ENCODE measurements at regions of chrX and their contacts with region 1.

Region 1: GRCh38 chrX:72258174-72258573 is 18.9 kb downstream of the RPS4X start:
- DNase-seq: peak; percentile 64
- ATAC-seq: peak; percentile 83
- H3K4me3 ChIP-seq: peak overlapping the region; percentile 16 to 61 (median 32); a peak in 4 of 6 replicates
- H3K27ac ChIP-seq: peak overlapping the region; percentile 49
- H3K4me1 ChIP-seq: peaks cover 40% of the 10 kb centered on the region
- H3K27me3 ChIP-seq: no peaks in the 10 kb centered on the region
- CTCF ChIP-seq: no peak
- EP300 ChIP-seq: 0 out of 4 replicates have a peak, but pooled peaks of 1 of the 2 experiments have one; percentile 43
- POLR2A ChIP-seq: peak in 1 of 2 experiments; percentile 38; a peak in 1 of 4 replicates
- RAD21 ChIP-seq: no peak

Region 2: DNA sequence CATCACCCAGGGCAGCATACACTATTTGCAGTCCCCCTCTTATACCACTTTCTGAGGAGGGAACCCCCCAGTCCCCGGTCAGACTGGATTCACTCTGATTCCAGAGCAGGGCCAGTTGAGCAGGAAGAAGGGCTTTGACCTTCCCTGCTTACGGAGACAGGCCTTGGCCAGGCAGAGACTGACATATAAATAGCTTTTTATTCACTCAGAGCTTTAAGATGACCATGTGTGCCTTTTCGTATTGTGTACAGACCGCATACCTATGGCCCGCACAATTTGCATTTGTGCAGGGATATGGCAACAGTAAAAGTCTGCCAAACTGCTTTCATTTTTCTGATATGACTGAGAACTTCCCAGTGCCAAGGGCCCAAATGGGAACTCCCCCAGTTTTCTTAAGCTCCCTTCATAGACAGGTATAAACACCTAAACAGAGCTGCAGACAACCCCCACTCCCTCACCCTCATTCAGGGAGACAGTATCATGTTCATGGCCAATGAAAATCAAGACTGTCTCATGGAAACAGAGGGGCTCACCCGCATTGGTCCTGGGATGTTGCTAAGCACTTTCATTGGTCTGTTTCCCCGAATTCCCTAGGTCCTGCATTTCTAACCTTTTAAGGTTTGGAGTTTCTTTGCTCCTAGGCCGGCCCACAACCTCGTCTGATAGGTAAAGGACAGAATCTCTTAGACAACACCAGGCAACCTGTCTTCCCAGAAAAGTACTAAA is 212.5 kb before region 1 on chrX:
- CTCF ChIA-PET with region 1: no interaction called
- POLR2A ChIA-PET with region 1: no interaction called
- in situ Hi-C with region 1: no loop called
- intact Hi-C with region 1: no loop called
- DNase-seq: no peak
- ATAC-seq: no peak
- H3K4me3 ChIP-seq: no peak overlapping the region
- H3K27ac ChIP-seq: no peak overlapping the region
- H3K4me1 ChIP-seq: no peaks in the 10 kb centered on the region
- H3K27me3 ChIP-seq: no peaks in the 10 kb centered on the region
- CTCF ChIP-seq: no peak
- EP300 ChIP-seq: no peak
- POLR2A ChIP-seq: no peak
- RAD21 ChIP-seq: no peak

Region 3: GRCh38 chrX:72276478-72276953 is 18.3 kb after region 1 on chrX:
- CTCF ChIA-PET with region 1: no interaction called
- POLR2A ChIA-PET with region 1: interaction called, 10 read pairs
- in situ Hi-C with region 1: no loop called
- intact Hi-C with region 1: no loop called
- DNase-seq: no peak
- ATAC-seq: no peak
- H3K4me3 ChIP-seq: peak overlapping the region; percentile 80 to 85 (median 84)
- H3K27ac ChIP-seq: peak overlapping the region; percentile 74
- H3K4me1 ChIP-seq: peaks cover 41% of the 10 kb centered on the region
- H3K27me3 ChIP-seq: peaks cover 0 to 1% of the 10 kb centered on the region in 2 experiments; a peak in 1 of 5 replicates
- CTCF ChIP-seq: no peak
- EP300 ChIP-seq: no peak
- POLR2A ChIP-seq: no peak
- RAD21 ChIP-seq: no peak

Measured in HepG2 (cell line).